ENCODE measurements at regions of chr4 and their contacts with region 1.

Region 1: GRCh38 chr4:73308286-73308685 is 49.7 kb upstream of the ANKRD17 start:
- DNase-seq: peak; percentile 24
- ATAC-seq: peak; percentile 87
- H3K4me3 ChIP-seq: no peak overlapping the region
- H3K27ac ChIP-seq: no peak overlapping the region
- H3K4me1 ChIP-seq: peaks cover 23% of the 10 kb centered on the region
- H3K27me3 ChIP-seq: no peaks in the 10 kb centered on the region
- CTCF ChIP-seq: peak; percentile 73
- EP300 ChIP-seq: no peak
- POLR2A ChIP-seq: no peak
- RAD21 ChIP-seq: 0 out of 2 replicates have a peak, but pooled peaks have one; percentile 22

Region 2: DNA sequence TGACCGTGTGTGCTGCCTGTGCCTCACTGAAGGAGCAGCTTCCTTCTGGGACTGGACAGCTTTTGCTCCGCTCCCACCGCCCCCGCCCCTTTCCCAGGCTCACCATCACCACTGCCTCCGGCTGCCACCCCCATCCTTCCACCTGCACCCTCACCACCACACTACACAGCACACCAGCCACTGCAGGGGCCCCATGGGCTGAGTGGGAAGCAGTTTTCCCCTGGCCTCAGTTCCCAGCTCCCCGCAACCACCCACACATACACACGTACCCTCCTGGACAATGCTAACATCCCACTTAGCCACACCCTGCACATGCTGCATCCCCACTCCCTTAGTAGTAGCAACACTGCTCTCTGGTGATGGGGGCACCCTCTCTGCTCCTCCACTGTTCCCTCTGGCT is 209.1 kb before region 1 on chr4:
- CTCF ChIA-PET with region 1: no interaction called
- POLR2A ChIA-PET with region 1: no interaction called
- in situ Hi-C with region 1: no loop called
- intact Hi-C with region 1: no loop called
- DNase-seq: no peak
- ATAC-seq: peak; percentile 39
- H3K4me3 ChIP-seq: no peak overlapping the region
- H3K27ac ChIP-seq: no peak overlapping the region
- H3K4me1 ChIP-seq: peaks cover 20% of the 10 kb centered on the region
- H3K27me3 ChIP-seq: no peaks in the 10 kb centered on the region
- CTCF ChIP-seq: no peak
- EP300 ChIP-seq: no peak
- POLR2A ChIP-seq: peak; percentile 35 to 36; a peak in 2 of 4 replicates
- RAD21 ChIP-seq: no peak

Region 3: DNA sequence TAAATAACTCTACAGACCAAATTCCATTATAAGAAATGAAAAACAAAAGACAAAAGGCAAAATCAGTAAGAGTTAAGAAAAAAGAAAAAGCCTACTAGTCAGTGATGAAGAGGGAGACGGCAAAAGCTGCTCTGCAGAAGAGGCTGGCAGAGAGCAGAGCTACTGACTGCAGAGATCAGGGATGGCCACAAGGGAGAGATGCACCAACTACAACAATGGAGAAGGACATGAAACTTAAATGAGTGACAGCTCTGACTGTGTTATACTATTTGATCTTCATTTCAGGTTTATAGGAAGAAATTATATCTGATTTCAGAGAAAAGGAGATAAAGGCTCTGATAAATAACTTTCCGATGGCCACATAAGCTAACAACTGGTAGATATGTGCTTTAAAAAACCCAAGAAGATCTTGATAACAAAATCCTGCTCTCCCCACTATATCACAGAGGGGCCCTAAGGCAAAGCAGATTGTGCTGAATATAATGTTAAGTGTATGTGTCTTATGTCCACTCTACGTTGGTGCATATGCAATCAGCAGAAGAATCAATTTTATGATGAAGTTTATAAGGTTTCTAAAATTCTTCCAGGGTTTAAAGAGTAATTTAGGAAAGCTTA is 180.3 kb before region 1 on chr4:
- CTCF ChIA-PET with region 1: no interaction called
- POLR2A ChIA-PET with region 1: no interaction called
- in situ Hi-C with region 1: no loop called
- intact Hi-C with region 1: loop called (anchors 5 kb)
- DNase-seq: peak; percentile 9
- ATAC-seq: peak; percentile 96
- H3K4me3 ChIP-seq: no peak overlapping the region
- H3K27ac ChIP-seq: no peak overlapping the region
- H3K4me1 ChIP-seq: no peaks in the 10 kb centered on the region
- H3K27me3 ChIP-seq: no peaks in the 10 kb centered on the region
- CTCF ChIP-seq: no peak
- EP300 ChIP-seq: no peak
- POLR2A ChIP-seq: no peak
- RAD21 ChIP-seq: no peak

Region 4: DNA sequence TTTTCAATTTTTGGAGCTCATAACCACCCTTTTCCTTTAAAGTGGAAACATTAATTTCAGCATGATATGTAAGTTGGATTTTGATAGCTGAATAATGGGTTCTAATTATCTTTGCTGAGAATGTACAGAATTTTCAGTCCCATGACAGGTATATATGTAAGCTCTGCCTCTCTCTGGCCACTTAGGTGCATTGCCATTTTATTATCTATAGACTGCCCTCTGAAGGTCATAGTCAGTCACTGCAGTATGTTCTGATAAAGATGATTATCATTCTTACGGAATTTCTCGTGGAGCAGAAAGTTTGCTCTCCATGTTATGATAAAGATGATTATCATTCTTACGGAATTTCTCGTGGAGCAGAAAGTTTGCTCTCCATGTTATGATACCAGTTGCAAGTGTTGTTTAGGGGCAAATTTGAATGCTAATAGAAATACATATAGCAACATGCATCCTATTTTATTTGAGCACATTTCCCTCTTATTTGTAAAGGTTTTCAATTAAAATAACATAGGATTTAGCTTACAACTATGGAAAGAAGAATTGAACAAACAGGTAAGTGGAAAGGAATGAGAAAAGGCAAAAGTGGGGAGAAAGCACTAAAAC is 138.2 kb after region 1 on chr4:
- CTCF ChIA-PET with region 1: interaction called, 15 read pairs
- POLR2A ChIA-PET with region 1: no interaction called
- in situ Hi-C with region 1: no loop called
- intact Hi-C with region 1: loop called (anchors 1 kb)
- DNase-seq: peak; percentile 78
- ATAC-seq: peak; percentile 64
- H3K4me3 ChIP-seq: no peak overlapping the region; a peak in 1 of 6 replicates
- H3K27ac ChIP-seq: peak overlapping the region; percentile 38
- H3K4me1 ChIP-seq: peaks cover 82% of the 10 kb centered on the region
- H3K27me3 ChIP-seq: no peaks in the 10 kb centered on the region
- CTCF ChIP-seq: peak; percentile 75
- EP300 ChIP-seq: no peak
- POLR2A ChIP-seq: peak in 1 of 2 experiments; percentile 39; a peak in 2 of 4 replicates
- RAD21 ChIP-seq: peak; percentile 75

Region 5: GRCh38 chr4:73653695-73654106 is 345.4 kb after region 1 on chr4:
- CTCF ChIA-PET with region 1: interaction called, 4 read pairs
- POLR2A ChIA-PET with region 1: no interaction called
- in situ Hi-C with region 1: loop called (anchors 10 kb)
- intact Hi-C with region 1: loop called (anchors 5 kb)
- DNase-seq: peak; percentile 45
- ATAC-seq: peak; percentile 90
- H3K4me3 ChIP-seq: no peak overlapping the region
- H3K27ac ChIP-seq: no peak overlapping the region
- H3K4me1 ChIP-seq: peaks cover 1% of the 10 kb centered on the region; the same call in 1 of the 2 replicates
- H3K27me3 ChIP-seq: no peaks in the 10 kb centered on the region
- CTCF ChIP-seq: peak; percentile 73
- EP300 ChIP-seq: no peak
- POLR2A ChIP-seq: no peak
- RAD21 ChIP-seq: peak; percentile 61

Region 6: DNA sequence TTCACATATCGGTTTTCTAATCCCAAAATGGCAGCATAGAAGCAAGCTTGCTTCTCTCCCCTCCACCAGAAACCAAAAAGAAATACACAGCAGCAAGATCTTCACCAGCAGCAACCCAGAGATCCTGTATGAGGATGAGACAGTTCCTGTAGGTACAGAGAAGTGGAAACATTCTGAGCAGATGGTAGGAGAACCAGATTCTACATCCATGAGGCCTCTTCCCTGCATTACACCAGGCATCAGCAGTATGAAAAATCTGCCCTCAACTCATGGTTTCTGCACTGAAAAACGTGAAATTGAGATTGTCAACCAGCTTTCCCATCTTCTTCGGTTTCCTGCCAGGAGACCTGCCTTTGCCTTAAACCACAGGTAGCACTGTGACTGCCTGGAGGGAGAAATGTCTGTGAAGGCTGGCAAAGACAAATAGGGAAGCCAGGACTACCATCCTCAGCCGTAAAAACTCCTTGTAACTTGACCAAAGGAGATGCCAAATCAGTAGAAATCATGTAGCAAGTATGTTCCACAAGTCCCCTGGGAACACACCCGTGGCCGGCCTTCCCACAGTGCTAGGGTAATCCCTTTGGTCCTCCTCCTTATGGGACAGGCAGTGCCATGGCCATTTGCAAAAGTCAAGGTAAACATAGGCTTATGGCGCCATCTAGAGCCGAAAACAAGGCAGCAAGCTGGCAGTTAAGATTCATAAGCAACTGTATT is 825.7 kb after region 1 on chr4:
- CTCF ChIA-PET with region 1: no interaction called
- POLR2A ChIA-PET with region 1: no interaction called
- in situ Hi-C with region 1: loop called (anchors 25 kb)
- intact Hi-C with region 1: no loop called
- DNase-seq: peak; percentile 54
- ATAC-seq: peak; percentile 87
- H3K4me3 ChIP-seq: no peak overlapping the region
- H3K27ac ChIP-seq: no peak overlapping the region
- H3K4me1 ChIP-seq: no peaks in the 10 kb centered on the region
- H3K27me3 ChIP-seq: no peaks in the 10 kb centered on the region
- CTCF ChIP-seq: peak; percentile 87
- EP300 ChIP-seq: no peak
- POLR2A ChIP-seq: no peak
- RAD21 ChIP-seq: peak; percentile 74

Measured in HepG2 (cell line).